ENCODE measurements at regions of chr5 and their contacts with region 1.

Region 1: GRCh38 chr5:146541958-146542849 is 26.2 kb upstream of the GPR151 start:
- DNase-seq: peak; percentile 85
- ATAC-seq: peak; percentile 92
- H3K4me3 ChIP-seq: no peak overlapping the region
- H3K27ac ChIP-seq: no peak overlapping the region
- H3K4me1 ChIP-seq: peaks cover 8% of the 10 kb centered on the region
- H3K27me3 ChIP-seq: 0 out of 2 replicates have a peak, but pooled peaks cover 5% of the 10 kb centered on the region
- CTCF ChIP-seq: peak; percentile 99

Region 2: GRCh38 chr5:146565764-146566367 is 23.7 kb after region 1 on chr5:
- CTCF ChIA-PET with region 1: no interaction called
- POLR2A ChIA-PET with region 1: no interaction called
- intact Hi-C with region 1: loop called (anchors 2 kb)
- DNase-seq: peak; percentile 72
- ATAC-seq: peak; percentile 58
- H3K4me3 ChIP-seq: no peak overlapping the region
- H3K27ac ChIP-seq: no peak overlapping the region
- H3K4me1 ChIP-seq: peaks cover 22% of the 10 kb centered on the region
- H3K27me3 ChIP-seq: 0 out of 2 replicates have a peak, but pooled peaks cover 3% of the 10 kb centered on the region
- CTCF ChIP-seq: peak; percentile 90

Region 3: DNA sequence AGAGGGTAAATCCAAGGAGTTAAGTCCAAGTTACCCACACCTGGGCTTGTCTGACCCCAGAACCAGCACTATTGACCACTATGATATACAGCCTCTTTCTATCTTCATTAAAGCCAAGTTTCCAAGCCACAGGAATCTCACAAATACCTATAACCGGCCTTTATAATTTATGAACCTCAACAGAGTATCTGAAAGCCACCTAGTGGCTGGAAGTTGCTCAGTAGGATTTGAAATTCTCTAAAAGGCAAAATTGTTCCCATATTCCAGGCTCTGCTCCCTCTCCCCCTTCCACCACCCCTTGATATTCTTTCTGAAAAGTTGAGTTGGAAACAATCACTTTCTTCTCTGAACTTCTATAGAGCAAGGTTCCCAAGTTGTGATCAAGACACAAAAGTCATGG is 80.2 kb after region 1 on chr5:
- CTCF ChIA-PET with region 1: no interaction called
- POLR2A ChIA-PET with region 1: no interaction called
- intact Hi-C with region 1: loop called (anchors 1 kb)
- DNase-seq: peak; percentile 47
- ATAC-seq: peak; percentile 65
- H3K4me3 ChIP-seq: no peak overlapping the region
- H3K27ac ChIP-seq: no peak overlapping the region
- H3K4me1 ChIP-seq: no peaks in the 10 kb centered on the region
- H3K27me3 ChIP-seq: peaks cover 60% of the 10 kb centered on the region
- CTCF ChIP-seq: peak; percentile 83

Region 4: GRCh38 chr5:146751781-146752401 is 209.7 kb after region 1 on chr5:
- CTCF ChIA-PET with region 1: no interaction called
- POLR2A ChIA-PET with region 1: no interaction called
- intact Hi-C with region 1: no loop called
- DNase-seq: no peak
- ATAC-seq: no peak
- H3K4me3 ChIP-seq: no peak overlapping the region
- H3K27ac ChIP-seq: no peak overlapping the region
- H3K4me1 ChIP-seq: peaks cover 11% of the 10 kb centered on the region
- H3K27me3 ChIP-seq: peaks cover 28% of the 10 kb centered on the region
- CTCF ChIP-seq: no peak

Region 5: GRCh38 chr5:146772881-146773466 is 230.8 kb after region 1 on chr5:
- CTCF ChIA-PET with region 1: no interaction called
- POLR2A ChIA-PET with region 1: no interaction called
- intact Hi-C with region 1: loop called (anchors 5 kb)
- DNase-seq: no peak
- ATAC-seq: no peak
- H3K4me3 ChIP-seq: no peak overlapping the region
- H3K27ac ChIP-seq: no peak overlapping the region
- H3K4me1 ChIP-seq: no peaks in the 10 kb centered on the region
- H3K27me3 ChIP-seq: no peaks in the 10 kb centered on the region
- CTCF ChIP-seq: no peak

Region 6: DNA sequence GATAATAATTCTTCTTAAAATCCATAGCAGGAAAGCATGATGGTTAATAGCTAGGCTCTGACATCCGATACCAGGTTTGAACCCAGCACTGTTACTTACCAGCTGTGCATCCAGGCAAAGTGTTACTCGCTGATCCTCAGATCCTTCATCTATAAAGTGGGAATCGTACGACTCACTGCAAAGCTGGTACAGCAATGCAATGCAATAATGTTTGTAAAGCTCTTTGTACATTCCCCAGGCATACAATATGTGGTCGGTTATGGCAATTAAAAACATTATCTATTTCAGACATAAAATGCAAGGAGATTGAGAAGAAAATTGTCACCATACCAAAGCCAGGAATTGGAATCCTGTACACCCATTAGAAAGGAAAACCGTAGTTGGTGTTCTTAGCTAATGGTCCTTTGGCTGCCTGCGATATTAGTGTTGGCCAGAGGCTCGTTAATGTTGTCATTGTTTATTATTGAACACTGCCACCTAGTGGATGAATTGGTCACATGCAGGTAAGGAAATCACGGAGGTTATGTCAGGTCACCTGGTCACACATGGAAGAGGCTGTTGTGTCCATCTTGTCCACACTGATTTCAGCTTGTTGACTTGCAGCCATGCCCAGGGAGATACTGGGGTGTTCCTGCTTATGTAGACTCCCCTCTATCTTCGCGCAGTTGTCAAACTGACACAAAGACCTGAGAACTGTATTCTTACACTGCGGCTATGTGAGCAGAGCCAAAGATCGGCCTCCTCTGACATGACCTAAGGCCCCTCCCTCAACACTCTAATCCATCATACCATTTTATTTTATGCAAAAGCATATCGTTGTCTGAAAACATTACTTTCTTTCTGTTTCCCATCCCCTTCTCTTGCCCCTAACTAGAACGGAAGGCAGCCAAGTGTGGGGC is 423.8 kb after region 1 on chr5:
- CTCF ChIA-PET with region 1: interaction called, 6 read pairs
- POLR2A ChIA-PET with region 1: no interaction called
- intact Hi-C with region 1: loop called (anchors 1 kb)
- DNase-seq: peak; percentile 83
- ATAC-seq: peak; percentile 88
- H3K4me3 ChIP-seq: no peak overlapping the region
- H3K27ac ChIP-seq: no peak overlapping the region
- H3K4me1 ChIP-seq: no peaks in the 10 kb centered on the region
- H3K27me3 ChIP-seq: peaks cover 21% of the 10 kb centered on the region; the same call in 1 of the 2 replicates
- CTCF ChIP-seq: peak; percentile 76

Region 7: DNA sequence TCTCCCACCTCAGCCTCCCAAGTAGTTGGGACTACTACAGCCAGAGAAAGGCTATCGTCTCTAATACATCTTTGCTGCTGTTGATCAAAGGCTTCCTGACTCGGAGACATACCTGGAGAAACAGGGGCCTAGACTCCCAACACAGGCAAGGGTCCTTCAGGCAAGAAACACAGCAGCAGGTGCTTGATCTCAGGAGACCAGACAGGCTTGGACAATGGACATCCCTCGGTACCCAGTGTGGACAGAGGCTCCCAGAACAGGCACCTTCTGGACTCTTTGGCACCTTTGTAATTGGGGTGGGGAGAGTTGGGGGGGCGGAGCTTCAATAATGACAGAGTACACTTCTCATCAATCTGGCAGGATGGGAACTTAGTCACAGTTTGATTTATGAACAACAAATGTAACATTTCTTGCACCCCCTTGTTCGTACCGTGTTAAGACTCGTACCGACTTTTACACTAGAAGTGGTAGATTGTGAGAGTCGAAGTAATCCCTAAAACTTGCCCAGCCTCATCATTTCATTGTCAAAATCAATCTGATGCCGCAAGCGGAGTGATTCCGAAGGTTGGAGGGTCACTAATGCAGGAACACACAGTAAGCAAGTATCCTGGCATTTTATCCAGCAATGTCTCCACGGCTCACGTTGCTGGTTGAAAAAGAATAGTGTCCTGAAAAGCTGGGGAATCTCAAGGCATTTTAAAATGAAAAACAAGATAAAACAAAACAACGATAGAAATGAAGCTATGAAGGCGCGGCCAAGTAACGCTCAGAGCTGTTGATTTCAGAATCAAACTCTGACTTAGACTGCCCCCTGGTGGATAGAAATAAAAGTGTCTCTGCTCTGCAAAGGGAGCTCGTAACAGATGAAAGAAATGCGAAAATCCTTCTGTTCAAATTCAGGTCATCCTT is 646.2 kb after region 1 on chr5:
- CTCF ChIA-PET with region 1: interaction called, 4 read pairs
- POLR2A ChIA-PET with region 1: no interaction called
- intact Hi-C with region 1: loop called (anchors 2 kb)
- DNase-seq: peak; percentile 75
- ATAC-seq: peak; percentile 85
- H3K4me3 ChIP-seq: peak overlapping the region; percentile 68
- H3K27ac ChIP-seq: no peak overlapping the region
- H3K4me1 ChIP-seq: no peaks in the 10 kb centered on the region
- H3K27me3 ChIP-seq: peaks cover 24% of the 10 kb centered on the region
- CTCF ChIP-seq: peak; percentile 79

Region 8: GRCh38 chr5:147369742-147370374 is 827.7 kb after region 1 on chr5:
- CTCF ChIA-PET with region 1: no interaction called
- POLR2A ChIA-PET with region 1: no interaction called
- intact Hi-C with region 1: loop called (anchors 2 kb)
- DNase-seq: peak; percentile 41
- ATAC-seq: no peak
- H3K4me3 ChIP-seq: no peak overlapping the region
- H3K27ac ChIP-seq: no peak overlapping the region
- H3K4me1 ChIP-seq: no peaks in the 10 kb centered on the region
- H3K27me3 ChIP-seq: no peaks in the 10 kb centered on the region
- CTCF ChIP-seq: peak; percentile 76